Sigmoid colon (tissue), 7 donors: ENCODE measurements at regions of chr5 and their contacts with region 1.

Region 1: DNA sequence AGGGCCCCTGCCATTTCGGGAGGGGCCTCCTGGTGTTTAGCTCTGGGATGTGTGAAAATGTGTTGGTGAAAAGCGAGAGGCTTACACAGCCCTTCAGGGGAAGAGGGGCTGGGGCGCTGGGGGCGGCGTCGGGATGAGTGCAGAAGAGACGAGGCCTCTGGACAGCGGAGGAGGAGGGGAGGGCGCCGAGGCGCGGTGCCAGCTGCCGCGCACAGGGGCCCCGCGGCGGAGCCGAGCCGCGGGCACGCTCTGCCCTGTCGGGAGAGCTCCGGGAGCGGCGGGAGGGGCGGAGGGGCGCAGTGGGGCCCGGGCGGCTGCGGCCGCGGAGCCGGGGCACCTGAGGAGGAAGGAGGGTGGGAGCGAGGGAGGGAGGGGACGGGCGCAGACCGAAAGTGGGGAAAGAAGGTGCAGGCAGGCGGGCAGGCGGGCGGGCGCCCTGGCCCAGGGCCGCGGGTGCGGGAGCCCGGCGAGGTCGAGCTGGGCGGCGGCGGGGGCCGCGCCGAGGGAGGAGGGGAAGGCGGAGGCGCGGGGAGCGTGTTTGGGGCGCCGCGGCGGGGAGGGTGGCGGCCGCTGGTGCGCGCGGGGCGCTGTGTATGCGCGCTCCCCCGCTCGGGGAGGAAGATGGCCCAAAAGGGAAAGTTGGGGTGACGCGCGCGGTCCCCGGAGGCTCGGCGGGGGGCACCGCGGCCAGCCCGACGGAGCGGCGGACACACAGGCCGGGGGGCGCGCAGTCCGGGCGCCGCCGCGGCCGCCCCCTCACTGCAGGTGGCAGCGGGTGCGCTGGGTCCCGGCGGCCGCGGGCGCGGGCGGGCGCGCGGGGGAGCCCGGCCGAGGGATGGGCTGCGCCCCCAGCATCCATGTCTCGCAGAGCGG is at the start of gene PDE8B:
- DNase-seq: no peak
- H3K4me3 ChIP-seq: peak within 1 kb of the TSS; percentile 40 to 86 (median 68)
- H3K27ac ChIP-seq: peak within 1 kb of the TSS in 3 of 4 donors; percentile 29 to 57 (median 43)
- H3K4me1 ChIP-seq: peaks cover 0 to 22% (median 10%) of the 10 kb centered on the region in 4 donors
- H3K27me3 ChIP-seq: peaks cover 0 to 8% (median 3%) of the 10 kb centered on the region in 3 donors
- CTCF ChIP-seq: no peak
- EP300 ChIP-seq: no peak
- POLR2A ChIP-seq: no peak
- total RNA-seq, gene PDE8B: 2.9 to 11.3 (median 6.1) TPM

Region 2: DNA sequence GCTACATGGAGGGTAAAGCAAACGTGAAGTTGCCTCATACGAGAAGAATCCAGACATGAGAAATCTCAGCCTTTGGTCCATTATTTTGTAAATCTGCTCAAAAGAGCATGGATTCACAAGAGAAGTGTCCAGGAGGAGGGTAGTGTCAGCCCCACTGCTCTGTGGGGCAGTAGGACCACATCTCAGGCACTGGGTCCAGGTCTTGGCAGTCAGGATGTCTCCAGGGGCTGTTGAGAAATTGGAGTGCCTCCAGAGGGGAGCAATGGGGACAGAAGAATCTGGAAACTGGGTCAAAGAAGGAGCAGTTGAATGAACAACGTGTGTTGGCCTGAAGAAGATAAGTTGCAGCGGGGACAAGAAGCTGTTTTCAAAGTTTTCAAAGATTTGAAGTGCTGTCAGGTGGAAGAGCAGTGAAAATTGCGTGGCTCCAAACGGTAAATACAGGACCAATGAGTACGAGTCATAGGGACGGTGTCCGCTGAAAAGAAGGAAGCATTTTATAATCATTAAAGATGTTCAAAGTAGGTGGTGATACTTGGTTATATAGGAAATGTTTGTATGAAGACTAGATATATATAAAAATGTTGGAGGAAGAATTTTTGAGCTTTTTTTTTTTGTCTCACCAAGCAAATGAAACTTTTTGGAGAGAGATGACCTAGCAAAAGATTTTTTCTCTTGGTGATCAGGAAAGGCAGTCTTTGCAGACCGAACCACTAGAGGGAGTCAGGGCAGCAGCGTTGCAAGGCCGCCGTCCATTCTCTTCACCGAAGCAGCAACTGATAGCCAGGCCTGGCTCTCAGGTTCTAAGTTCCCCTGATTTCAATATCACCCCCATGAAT is 66.1 kb before region 1 on chr5:
- intact Hi-C with region 1: loop called (anchors 2 kb)
- DNase-seq: peak; percentile 86
- H3K4me3 ChIP-seq: no peak overlapping the region
- H3K27ac ChIP-seq: no peak overlapping the region
- H3K4me1 ChIP-seq: no peaks in the 10 kb centered on the region
- H3K27me3 ChIP-seq: no peaks in the 10 kb centered on the region
- CTCF ChIP-seq: peak; percentile 31 to 82 (median 63)
- EP300 ChIP-seq: no peak
- POLR2A ChIP-seq: no peak

Region 3: DNA sequence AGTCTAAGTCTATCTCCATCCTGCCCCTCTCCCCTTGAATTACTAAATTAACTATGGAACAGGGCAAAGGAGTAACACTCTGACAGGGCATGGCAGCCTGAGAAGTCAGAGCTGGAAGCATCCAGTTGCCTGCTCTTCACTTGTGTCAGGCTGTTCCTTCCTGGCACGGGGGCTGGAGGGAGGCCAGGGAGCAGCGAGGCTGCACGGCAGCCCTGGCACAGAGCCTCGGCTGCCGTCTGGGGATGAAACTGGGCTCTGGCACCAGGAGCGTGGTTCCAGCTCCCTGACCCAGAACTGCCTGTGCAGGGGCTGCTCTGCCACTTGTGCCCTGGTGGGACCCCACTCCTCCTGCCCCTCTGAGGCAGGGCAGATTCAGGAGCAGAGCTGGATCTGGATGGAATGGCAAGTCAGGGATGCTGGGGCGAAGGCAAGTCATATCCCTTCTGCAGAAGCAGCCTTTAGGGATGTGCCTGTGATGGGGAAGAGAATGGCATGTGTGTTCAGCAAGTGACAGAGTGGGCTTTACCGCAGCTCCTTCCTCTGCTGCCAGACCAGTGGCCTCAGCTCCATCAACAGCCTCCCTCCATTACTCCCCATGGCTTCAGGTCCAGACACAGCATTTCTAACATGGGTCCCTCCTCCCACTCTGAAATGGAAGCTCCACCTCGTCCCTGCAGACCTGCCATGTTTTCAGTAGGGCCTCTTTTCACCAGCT is 42.0 kb before region 1 on chr5:
- intact Hi-C with region 1: loop called (anchors 5 kb)
- DNase-seq: peak; percentile 91
- H3K4me3 ChIP-seq: no peak overlapping the region
- H3K27ac ChIP-seq: peak overlapping the region in 3 of 4 donors; percentile 64 to 72 (median 64)
- H3K4me1 ChIP-seq: peaks cover 0 to 24% (median 18%) of the 10 kb centered on the region in 4 donors
- H3K27me3 ChIP-seq: no peaks in the 10 kb centered on the region
- CTCF ChIP-seq: no peak
- EP300 ChIP-seq: no peak
- POLR2A ChIP-seq: no peak

Region 4: DNA sequence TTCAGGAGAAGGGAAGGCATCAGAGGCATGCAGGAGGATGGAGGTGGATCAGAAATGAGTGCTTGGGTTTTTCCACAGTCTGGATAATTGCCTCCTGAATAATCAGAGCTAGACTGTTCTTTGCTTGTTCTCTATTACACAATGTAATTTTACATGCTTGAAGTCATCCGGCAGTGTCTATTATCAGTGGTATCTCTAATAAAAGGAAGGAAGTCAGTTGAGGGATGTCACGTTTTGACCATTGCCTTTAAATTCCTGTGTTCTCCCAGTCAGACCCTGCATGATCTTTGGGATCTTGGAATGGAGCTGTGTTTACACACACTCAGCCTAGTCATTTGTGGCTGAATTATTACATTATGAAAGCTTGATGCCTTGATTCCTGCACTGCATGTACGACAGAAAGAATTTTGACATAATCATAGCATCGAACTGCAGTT is 91.1 kb after region 1 on chr5:
- intact Hi-C with region 1: loop called (anchors 5 kb)
- DNase-seq: no peak
- H3K4me3 ChIP-seq: no peak overlapping the region
- H3K27ac ChIP-seq: peak overlapping the region in 2 of 4 donors; percentile 26 to 47
- H3K4me1 ChIP-seq: peaks cover 0 to 41% (median 24%) of the 10 kb centered on the region in 4 donors
- H3K27me3 ChIP-seq: no peaks in the 10 kb centered on the region
- CTCF ChIP-seq: no peak
- EP300 ChIP-seq: no peak
- POLR2A ChIP-seq: no peak

Region 5: GRCh38 chr5:77437194-77437593 is 226.9 kb after region 1 on chr5:
- intact Hi-C with region 1: loop called (anchors 5 kb)
- DNase-seq: no peak
- H3K4me3 ChIP-seq: no peak overlapping the region
- H3K27ac ChIP-seq: no peak overlapping the region
- H3K4me1 ChIP-seq: no peaks in the 10 kb centered on the region
- H3K27me3 ChIP-seq: no peaks in the 10 kb centered on the region
- CTCF ChIP-seq: peak in 1 of 4 experiments; percentile 27
- EP300 ChIP-seq: no peak
- POLR2A ChIP-seq: no peak

Region 6: DNA sequence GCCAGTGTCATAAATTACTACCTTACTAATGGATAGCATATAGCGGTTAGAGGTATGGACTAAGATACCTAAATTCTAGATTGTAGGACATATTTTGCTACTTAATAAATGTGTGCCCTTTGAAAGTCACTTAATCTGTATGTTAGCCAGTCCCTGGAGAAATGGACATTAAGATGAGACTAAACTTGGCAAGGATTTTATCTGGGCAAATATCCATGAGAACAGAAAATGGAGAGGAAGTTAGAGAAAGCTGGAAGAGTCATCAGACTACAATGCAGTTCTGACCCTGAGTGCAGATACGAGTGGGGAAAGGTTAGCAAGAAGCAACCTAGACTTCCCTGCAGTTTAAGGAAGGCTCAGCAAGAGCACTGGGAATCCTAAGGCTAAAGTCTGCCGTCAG is 532.9 kb after region 1 on chr5:
- intact Hi-C with region 1: no loop called
- DNase-seq: no peak
- H3K4me3 ChIP-seq: no peak overlapping the region
- H3K27ac ChIP-seq: no peak overlapping the region
- H3K4me1 ChIP-seq: peaks cover 0 to 24% (median 18%) of the 10 kb centered on the region in 4 donors
- H3K27me3 ChIP-seq: no peaks in the 10 kb centered on the region
- CTCF ChIP-seq: no peak
- EP300 ChIP-seq: no peak
- POLR2A ChIP-seq: no peak